Activated B cell treated with CpG ODN at 0.5 μM for 24 hours (primary cell): ENCODE measurements at regions of chr16 and their contacts with region 1.

Region 1: GRCh38 chr16:3059000-3059722 is 6.3 kb upstream of the IL32 start:
- DNase-seq: peak; percentile 91
- ATAC-seq: peak; percentile 96
- H3K4me3 Mint-ChIP-seq: peak overlapping the region; percentile 83
- H3K27ac Mint-ChIP-seq: peak overlapping the region; percentile 70
- H3K4me1 Mint-ChIP-seq: peaks cover 17% of the 10 kb centered on the region
- H3K27me3 Mint-ChIP-seq: no peaks in the 10 kb centered on the region
- CTCF ChIP-seq: no peak

Region 2: DNA sequence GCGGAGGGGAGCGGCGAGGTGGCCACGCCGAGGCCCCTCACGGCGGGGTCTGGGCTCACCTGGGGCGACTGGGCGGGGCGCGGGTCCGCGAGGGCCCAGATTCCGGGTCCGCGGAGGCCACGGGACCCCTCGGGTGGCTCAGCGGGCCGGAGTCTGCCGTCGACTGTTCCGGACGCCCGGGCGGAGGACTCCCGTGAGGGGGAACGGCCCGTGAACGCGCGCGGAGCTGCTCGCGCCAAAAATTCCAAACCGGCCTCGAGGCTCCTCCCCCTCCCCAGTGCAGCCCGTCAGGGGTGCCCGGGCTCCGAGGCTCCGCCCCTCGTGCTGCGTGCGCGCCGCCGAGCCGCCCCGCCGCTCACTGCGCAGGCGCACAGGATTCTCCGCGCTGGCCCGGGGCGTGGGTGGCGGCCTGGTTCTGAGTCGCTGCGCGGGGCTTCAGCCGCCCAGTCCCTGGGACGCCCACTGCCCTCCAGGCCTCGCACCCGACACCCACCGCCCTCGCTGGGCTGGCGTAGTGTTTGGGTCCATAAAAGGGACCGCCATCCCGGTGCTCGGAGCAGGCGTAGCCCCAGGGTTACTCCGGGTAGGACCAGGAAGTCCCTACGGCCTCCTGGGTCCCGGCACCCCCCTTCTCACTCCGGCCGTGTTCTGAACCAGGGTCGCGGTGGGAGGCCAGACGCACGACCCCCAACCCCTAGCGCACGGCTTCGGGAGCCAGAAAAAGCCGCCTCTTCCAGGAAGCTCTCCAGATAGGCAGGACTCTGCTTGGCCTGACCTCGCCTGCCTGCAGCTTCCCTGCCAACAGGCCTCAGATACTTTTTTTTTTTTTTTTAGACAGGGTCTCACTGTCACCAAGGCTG is 78.7 kb before region 1 on chr16 and contains the start of gene PKMYT1:
- CTCF ChIA-PET with region 1: no interaction called
- POLR2A ChIA-PET with region 1: interaction called, 4 read pairs
- intact Hi-C with region 1: loop called (anchors 2 kb)
- DNase-seq: peak; percentile 97
- ATAC-seq: peak; percentile 90
- H3K4me3 Mint-ChIP-seq: peak within 1 kb of the TSS; percentile 84
- H3K27ac Mint-ChIP-seq: peak within 1 kb of the TSS; percentile 78
- H3K4me1 Mint-ChIP-seq: peaks cover 27% of the 10 kb centered on the region
- H3K27me3 Mint-ChIP-seq: no peaks in the 10 kb centered on the region
- CTCF ChIP-seq: no peak
- total RNA-seq, gene PKMYT1: 3.8 and 4.3 TPM in 2 replicates

Region 3: DNA sequence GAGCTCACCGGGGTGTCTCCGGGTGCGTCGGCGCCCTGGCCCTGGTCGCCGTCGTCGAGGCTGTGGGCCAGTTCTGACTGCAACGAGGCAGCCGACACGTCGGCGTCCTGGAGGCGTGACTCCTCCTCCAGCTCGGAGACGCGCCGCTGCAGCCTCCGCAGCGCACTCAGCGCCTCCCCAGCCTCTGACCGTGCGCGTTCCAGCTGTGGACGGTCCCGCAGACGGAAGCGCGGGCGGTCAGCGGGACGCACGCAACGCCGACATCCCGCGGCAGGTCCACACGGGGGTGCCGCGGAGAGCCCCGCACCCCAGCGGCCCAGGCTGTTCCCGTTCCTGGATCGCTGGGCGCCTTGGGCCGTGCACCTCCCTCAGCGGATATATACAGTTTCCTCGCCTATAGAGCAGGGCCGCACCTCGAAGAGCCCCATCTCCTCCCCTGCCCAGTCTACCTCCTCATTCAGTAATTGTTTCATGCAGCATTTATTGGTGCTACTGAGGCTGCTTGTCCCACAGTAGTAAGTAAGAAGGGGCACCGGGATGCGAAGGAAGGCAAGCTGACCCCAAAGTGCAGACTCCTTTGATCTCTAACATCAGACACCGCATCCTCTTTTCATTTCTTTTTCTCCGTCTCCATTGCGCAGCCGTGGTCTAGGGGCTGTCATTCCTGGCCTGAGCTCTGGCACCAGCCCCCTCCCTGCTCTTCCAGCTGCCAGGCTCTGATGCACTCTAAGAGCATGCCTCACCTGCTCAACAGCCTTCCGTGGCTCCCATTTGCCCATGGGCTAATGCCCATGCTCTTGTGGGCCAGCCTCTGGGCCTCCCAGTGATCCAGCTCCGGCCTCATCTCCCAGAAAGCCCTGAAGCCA is 29.4 kb before region 1 on chr16:
- CTCF ChIA-PET with region 1: interaction called, 21 read pairs
- POLR2A ChIA-PET with region 1: interaction called, 5 read pairs
- intact Hi-C with region 1: loop called (anchors 2 kb)
- DNase-seq: no peak
- ATAC-seq: no peak
- H3K4me3 Mint-ChIP-seq: no peak overlapping the region
- H3K27ac Mint-ChIP-seq: no peak overlapping the region
- H3K4me1 Mint-ChIP-seq: peaks cover 13% of the 10 kb centered on the region
- H3K27me3 Mint-ChIP-seq: peaks cover 37% of the 10 kb centered on the region
- CTCF ChIP-seq: no peak

Region 4: DNA sequence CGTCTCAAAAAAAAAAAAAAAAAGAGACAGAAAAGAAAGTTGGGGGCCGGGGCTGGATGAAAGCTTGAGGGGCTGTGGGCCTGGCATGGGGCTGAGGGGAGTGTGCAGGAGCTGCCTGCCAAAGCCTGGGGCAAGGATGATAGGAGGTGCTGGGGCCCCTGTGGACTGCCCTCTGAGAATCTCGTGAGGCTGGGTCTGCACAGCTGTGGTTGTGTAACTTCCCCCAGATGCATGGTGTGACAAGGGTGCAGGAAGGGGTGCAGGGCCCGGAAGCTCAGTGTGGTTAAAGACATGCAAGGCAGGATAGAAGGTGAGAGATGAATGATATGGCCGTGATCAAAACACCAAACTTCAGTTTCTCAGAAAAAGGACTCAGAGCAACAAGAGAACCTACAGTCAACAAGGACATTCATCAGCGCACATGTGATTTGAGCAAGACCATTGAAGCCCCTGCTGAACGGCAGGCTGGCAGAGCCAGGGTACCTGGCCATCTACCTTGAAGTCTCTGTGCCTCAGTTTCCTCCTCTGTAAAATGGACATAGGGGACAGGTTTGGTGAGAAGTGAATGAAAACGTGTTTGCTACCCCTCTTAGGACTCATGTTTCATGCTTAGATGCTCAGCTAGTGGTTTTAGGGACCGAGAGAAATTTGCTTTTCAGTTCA is 15.8 kb after region 1 on chr16:
- CTCF ChIA-PET with region 1: interaction called, 13 read pairs
- POLR2A ChIA-PET with region 1: interaction called, 18 read pairs
- intact Hi-C with region 1: loop called (anchors 2 kb)
- DNase-seq: peak; percentile 41
- ATAC-seq: peak; percentile 94
- H3K4me3 Mint-ChIP-seq: peak overlapping the region; percentile 61
- H3K27ac Mint-ChIP-seq: peak overlapping the region; percentile 88
- H3K4me1 Mint-ChIP-seq: peaks cover 61% of the 10 kb centered on the region
- H3K27me3 Mint-ChIP-seq: no peaks in the 10 kb centered on the region
- CTCF ChIP-seq: no peak

Region 5: GRCh38 chr16:3129137-3130131 is 70.3 kb after region 1 on chr16:
- CTCF ChIA-PET with region 1: interaction called, 61 read pairs
- POLR2A ChIA-PET with region 1: interaction called, 31 read pairs
- intact Hi-C with region 1: loop called (anchors 1 kb)
- DNase-seq: peak; percentile 55
- ATAC-seq: peak; percentile 71
- H3K4me3 Mint-ChIP-seq: peak overlapping the region; percentile 92
- H3K27ac Mint-ChIP-seq: peak overlapping the region; percentile 89
- H3K4me1 Mint-ChIP-seq: peaks cover 43% of the 10 kb centered on the region
- H3K27me3 Mint-ChIP-seq: no peaks in the 10 kb centered on the region
- CTCF ChIP-seq: peak; percentile 95

Region 6: DNA sequence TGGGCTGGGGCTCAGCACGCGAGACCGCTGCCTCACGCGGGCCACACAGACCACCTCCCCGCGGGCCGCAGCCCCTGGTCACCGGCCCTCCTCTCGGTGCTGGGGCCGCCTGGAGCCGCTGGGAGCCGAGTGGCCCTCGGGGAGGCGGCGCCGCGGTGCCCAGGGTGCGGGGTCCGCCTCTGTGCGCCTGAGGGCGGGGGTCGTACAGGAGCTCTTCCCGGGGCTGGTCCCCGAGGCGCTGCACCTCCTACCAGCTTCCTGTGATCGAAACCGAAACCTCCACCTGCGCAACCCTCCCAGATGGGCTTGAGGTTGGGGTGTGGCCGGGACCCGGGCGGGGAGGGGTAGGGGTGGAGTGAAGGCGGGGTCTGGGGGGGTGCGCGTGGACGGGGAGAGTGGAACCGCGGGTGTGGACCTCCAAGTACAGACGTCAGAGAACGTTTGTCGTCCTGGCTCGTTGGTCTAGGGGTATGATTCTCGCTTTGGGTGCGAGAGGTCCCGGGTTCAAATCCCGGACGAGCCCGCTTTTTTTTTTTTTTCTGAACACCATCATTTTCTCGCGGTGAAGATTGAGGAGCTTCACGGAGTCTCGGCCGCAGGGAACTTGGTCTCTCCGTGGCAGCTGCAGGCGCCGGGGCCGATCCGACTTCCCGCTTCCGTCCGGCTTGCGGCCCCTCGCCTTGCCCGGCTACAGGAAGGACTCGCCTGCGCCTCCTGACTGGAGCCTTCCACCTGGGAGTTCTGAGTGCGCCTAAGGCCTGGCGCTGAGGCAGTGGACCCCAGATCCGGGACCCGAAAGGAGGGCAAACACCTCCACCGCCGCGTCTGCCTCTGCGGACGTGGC is 99.5 kb after region 1 on chr16:
- CTCF ChIA-PET with region 1: no interaction called
- POLR2A ChIA-PET with region 1: interaction called, 5 read pairs
- intact Hi-C with region 1: loop called (anchors 2 kb)
- DNase-seq: peak; percentile 77
- ATAC-seq: peak; percentile 90
- H3K4me3 Mint-ChIP-seq: peak overlapping the region; percentile 91
- H3K27ac Mint-ChIP-seq: peak overlapping the region; percentile 90
- H3K4me1 Mint-ChIP-seq: peaks cover 23% of the 10 kb centered on the region
- H3K27me3 Mint-ChIP-seq: peaks cover 3% of the 10 kb centered on the region
- CTCF ChIP-seq: no peak

Region 7: DNA sequence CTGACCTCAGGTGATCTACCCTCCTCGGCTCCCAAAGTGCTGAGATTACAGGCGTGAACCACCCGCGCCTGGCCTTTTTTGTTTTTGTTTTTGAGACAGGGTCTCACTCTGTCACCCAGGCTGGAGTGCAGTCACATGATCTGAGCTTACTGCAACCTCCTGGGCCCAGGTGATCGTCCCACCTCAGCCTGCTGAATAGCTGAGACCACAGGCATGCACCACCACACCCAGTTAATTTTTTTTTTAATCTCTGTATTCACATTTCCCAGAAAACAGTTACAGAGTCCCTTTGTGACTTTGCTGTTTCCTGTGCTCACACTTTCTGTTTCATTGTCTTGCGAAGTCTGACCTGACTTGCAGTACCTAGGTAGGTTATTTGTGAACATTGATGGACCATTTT is 444.4 kb after region 1 on chr16:
- CTCF ChIA-PET with region 1: no interaction called
- POLR2A ChIA-PET with region 1: no interaction called
- intact Hi-C with region 1: loop called (anchors 1 kb)
- DNase-seq: no peak
- ATAC-seq: no peak
- H3K4me3 Mint-ChIP-seq: peak overlapping the region; percentile 15
- H3K27ac Mint-ChIP-seq: no peak overlapping the region
- H3K4me1 Mint-ChIP-seq: peaks cover 29% of the 10 kb centered on the region
- H3K27me3 Mint-ChIP-seq: no peaks in the 10 kb centered on the region
- CTCF ChIP-seq: no peak